Aorta (tissue), 5 donors: ENCODE measurements at regions of chr9 and their contacts with region 1.

Region 1: GRCh38 chr9:126500684-126501382 is 112.9 kb upstream of the LMX1B start:
- DNase-seq: peak; percentile 83 to 93
- ATAC-seq: peak; percentile 81
- H3K4me3 ChIP-seq: no peak overlapping the region
- H3K27ac ChIP-seq: no peak overlapping the region
- H3K4me1 ChIP-seq: no peaks in the 10 kb centered on the region
- H3K27me3 ChIP-seq: no peaks in the 10 kb centered on the region

Region 2: DNA sequence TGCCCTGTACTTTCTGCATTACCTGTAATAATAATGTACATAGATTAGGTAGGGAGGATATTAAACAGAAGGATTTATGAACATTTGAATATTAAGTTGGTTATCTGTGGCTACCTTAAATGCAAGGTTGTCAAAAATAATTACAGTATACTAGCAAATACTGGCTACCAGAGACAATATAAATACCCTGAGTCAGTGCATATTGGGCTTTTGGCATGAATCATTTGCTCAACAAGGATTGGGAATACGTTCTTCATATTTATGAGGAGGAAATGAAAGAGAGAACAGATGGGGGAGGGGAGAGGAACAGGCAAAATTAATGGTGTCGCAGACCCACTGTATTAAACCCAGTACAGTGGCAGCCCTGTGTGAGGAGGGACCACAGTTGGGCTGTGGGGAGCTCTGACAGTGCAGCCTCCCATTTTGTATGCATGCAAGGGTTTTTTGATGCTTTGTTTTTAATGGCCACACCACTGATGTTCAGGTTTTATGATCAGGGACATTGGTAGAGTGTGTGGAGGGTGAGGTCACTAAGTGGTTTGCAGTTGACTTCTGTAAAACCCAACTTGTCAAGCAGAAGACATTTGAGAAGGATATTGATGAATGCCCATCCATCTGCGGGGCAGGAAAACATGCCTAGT is 117.3 kb before region 1 on chr9:
- intact Hi-C with region 1: no loop called
- DNase-seq: no peak
- ATAC-seq: no peak
- H3K4me3 ChIP-seq: no peak overlapping the region
- H3K27ac ChIP-seq: no peak overlapping the region
- H3K4me1 ChIP-seq: no peaks in the 10 kb centered on the region
- H3K27me3 ChIP-seq: no peaks in the 10 kb centered on the region

Region 3: DNA sequence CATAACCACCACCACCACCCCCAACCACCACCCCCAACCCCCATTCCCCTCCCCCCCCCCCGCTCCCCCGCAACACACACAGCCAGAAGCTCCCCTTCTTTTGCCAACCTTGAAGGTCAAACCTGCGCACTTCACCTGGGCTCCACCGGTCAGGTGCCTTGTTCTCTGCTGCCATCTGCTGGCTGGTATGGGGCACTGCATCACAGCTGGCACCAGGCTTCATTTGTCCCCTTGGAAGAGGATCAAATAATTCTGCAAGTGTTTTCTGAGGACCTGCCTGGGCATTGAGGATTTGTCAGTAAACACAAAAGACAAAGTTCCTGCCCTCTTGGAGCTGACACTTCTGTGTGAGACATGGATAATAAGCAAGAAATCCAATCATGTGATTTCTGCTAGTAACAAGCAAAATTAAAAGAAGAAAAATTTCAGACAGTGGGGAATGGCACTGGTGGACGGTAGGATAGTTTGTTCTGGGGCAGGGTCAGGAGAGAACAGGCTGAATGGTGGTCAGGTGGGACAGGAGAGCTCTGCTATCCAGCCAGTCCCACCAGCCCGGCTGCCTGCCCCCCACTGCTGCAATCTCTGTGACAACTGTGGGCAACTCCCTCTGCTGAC is 57.3 kb after region 1 on chr9:
- intact Hi-C with region 1: loop called (anchors 1 to 2 kb)
- DNase-seq: no peak
- ATAC-seq: peak; percentile 76
- H3K4me3 ChIP-seq: no peak overlapping the region
- H3K27ac ChIP-seq: no peak overlapping the region
- H3K4me1 ChIP-seq: no peaks in the 10 kb centered on the region
- H3K27me3 ChIP-seq: no peaks in the 10 kb centered on the region